PC-3 (cell line): ENCODE measurements at regions of chr3 and their contacts with region 1.

Region 1: GRCh38 chr3:126835898-126836860 is 132.1 kb downstream of the CHCHD6 start:
- DNase-seq: peak; percentile 7
- ATAC-seq: peak; percentile 72
- H3K4me3 ChIP-seq: no peak overlapping the region
- H3K27ac ChIP-seq: peak overlapping the region; percentile 61
- H3K4me1 ChIP-seq: peaks cover 17% of the 10 kb centered on the region
- H3K27me3 ChIP-seq: no peaks in the 10 kb centered on the region
- CTCF ChIP-seq: no peak

Region 2: GRCh38 chr3:126982471-126983175 is 146.4 kb after region 1 on chr3 and contains the start of gene PLXNA1:
- CTCF ChIA-PET with region 1: interaction called, 4 read pairs
- POLR2A ChIA-PET with region 1: no interaction called
- intact Hi-C with region 1: loop called (anchors 5 kb)
- DNase-seq: peak; percentile 77
- ATAC-seq: peak; percentile 74
- H3K4me3 ChIP-seq: peak within 1 kb of the TSS; percentile 83
- H3K27ac ChIP-seq: peak within 1 kb of the TSS; percentile 30; the same call in 1 of the 2 replicates
- H3K4me1 ChIP-seq: peaks cover 7% of the 10 kb centered on the region
- H3K27me3 ChIP-seq: no peaks in the 10 kb centered on the region
- CTCF ChIP-seq: peak; percentile 71
- total RNA-seq, gene PLXNA1: 30.0 and 38.0 TPM in 2 replicates